Activated CD4-positive, alpha-beta T cell treated with anti-CD3 and anti-CD28 coated beads for 36 hours (primary cell): ENCODE measurements at regions of chr7 and their contacts with region 1.

Region 1: GRCh38 chr7:139340037-139340807 is 915 bp upstream of the FMC1 start:
- DNase-seq: peak; percentile 99
- ATAC-seq: peak; percentile 79
- H3K4me3 Mint-ChIP-seq: peak overlapping the region; percentile 97
- H3K27ac Mint-ChIP-seq: peak overlapping the region; percentile 99
- H3K4me1 Mint-ChIP-seq: peaks cover 23% of the 10 kb centered on the region
- H3K27me3 Mint-ChIP-seq: peaks cover 2% of the 10 kb centered on the region

Region 2: DNA sequence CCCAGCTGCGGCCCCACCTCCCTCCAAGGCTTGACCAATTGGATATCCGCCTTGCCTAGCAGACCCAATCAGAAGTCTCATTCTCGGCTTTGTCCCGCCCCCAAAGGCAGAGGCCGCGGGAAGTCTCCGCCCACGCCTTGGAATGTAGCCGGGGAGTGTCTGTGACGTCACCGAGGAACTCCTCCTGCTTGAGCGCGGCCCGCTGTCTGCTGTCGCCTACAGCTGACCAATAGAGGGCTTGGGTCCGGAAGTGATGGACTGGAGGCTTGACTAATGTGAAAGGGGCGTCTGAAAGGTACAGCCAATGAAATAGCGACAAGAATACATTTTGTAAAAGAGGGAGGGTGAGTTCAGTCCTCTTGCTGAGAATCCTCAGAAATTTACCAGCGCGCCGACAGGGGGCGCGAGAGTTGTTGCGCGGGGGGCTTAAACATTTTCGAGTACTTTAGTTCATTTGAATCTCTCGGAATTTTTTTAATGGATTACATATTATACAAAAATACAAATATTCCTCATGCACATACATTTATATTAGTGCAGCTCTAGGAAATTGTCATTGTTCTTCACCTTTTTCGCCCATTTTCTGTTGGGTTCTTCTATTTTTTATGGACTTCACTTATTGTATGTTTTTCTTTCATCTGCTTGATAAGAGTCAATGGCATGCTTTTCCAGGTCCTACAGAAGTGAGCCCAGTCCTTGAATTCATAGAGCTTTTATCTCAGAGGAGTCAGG is 1338.0 kb before region 1 on chr7:
- CTCF ChIA-PET with region 1: no interaction called
- POLR2A ChIA-PET with region 1: no interaction called
- intact Hi-C with region 1: loop called in 1 of 2 experiments (anchors 2 kb)
- DNase-seq: peak; percentile 98
- ATAC-seq: peak; percentile 96
- H3K4me3 Mint-ChIP-seq: peak overlapping the region; percentile 82
- H3K27ac Mint-ChIP-seq: peak overlapping the region; percentile 92
- H3K4me1 Mint-ChIP-seq: peaks cover 24% of the 10 kb centered on the region
- H3K27me3 Mint-ChIP-seq: no peaks in the 10 kb centered on the region

Region 3: DNA sequence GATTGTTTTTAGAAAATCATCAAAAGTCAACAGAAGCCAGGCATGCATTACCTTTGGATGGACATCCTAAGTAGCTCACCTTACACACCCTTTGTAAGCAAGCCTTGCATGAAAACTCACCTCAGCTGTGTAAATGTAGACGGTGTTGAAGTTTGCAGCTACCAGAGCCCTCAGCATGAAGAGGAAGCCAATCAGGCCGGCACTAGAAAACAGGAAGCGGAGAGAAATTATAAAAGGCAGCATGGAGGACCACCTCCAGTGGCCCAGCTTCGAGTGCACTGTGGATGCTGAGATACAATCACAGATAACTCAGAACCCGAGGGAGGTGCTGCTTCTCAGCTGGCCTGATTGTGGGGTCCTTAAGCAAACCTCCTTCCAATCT is 714.4 kb before region 1 on chr7:
- CTCF ChIA-PET with region 1: no interaction called
- POLR2A ChIA-PET with region 1: no interaction called
- intact Hi-C with region 1: no loop called
- DNase-seq: peak; percentile 10
- ATAC-seq: peak; percentile 44
- H3K4me3 Mint-ChIP-seq: no peak overlapping the region
- H3K27ac Mint-ChIP-seq: peak overlapping the region; percentile 40
- H3K4me1 Mint-ChIP-seq: peaks cover 42% of the 10 kb centered on the region
- H3K27me3 Mint-ChIP-seq: no peaks in the 10 kb centered on the region

Region 4: DNA sequence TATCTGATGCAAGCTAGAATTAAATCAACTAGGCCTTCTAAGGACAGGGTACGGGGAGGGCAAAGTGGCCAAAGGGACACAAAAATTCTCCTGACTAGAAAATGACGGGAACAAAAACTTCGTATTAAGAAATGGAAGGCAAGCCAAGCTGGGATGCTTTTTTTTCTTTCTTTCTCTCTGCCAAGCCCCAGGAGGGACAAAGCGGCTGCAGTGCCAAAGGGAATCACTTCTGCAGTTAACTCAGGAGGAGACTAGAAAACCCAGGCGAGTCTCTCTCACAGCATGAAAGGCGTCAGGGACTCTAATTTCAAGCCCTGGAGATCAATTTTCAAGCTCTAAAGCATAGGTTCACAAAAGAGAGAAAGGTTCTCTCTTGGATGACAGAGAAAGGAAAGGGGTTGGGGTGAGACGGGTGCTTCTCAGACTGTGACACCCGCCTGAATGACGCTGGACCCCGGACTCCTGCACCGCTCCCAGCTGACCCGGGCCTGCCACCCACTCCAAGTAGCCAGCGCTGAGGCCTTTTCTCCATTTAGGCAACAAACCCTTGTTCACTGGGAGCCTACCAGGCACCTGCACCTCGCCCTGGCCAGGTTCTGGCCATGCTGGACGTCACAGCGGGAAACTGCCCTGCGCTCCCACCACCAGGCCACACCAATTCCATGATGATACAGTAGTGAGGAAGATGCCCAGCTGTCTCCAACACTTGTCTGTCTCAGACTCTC is 415.6 kb before region 1 on chr7:
- CTCF ChIA-PET with region 1: no interaction called
- POLR2A ChIA-PET with region 1: no interaction called
- intact Hi-C with region 1: no loop called
- DNase-seq: no peak
- ATAC-seq: no peak
- H3K4me3 Mint-ChIP-seq: no peak overlapping the region
- H3K27ac Mint-ChIP-seq: no peak overlapping the region
- H3K4me1 Mint-ChIP-seq: peaks cover 9% of the 10 kb centered on the region
- H3K27me3 Mint-ChIP-seq: no peaks in the 10 kb centered on the region

Region 5: DNA sequence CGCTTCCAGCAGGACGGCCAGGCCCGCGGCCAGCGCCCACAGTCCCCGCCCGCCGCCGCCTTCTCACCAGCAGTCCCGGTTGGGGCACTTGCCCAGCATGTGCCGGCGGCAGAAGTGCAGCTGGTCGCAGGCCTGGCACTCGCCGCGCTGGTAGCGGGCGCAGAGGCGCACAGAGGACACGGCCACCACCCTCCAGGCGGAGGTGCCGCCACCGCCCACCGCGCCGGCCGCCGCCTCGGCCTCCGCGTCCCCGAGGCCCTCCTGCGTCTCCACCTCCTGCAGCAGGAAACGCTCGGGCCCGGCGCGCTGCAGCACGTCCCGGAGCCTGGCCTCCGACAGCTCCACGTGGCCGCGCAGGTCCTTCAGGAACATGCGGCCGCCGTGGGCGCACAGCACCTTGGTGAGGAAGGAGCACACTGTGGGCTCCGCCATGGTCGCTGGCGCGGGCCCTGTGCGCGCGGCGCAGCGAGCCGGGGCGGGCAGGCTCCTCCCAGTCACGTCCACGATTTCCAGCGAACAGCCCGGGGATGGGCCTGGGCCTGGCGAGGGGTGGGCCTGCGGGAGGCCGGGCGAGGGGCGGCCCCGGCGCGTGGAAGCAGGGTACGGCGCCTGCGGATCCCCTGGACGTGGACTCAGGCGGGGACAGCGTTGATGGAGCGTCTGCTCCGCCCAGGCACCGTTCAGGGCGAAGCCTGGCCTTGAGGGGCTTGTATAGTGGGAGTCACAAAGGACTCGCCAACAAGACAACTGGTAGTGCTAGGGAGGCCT is 304.5 kb before region 1 on chr7 and contains the start of gene ZC3HAV1L:
- CTCF ChIA-PET with region 1: no interaction called
- POLR2A ChIA-PET with region 1: no interaction called
- intact Hi-C with region 1: loop called in 1 of 2 experiments (anchors 5 kb)
- DNase-seq: peak; percentile 83
- ATAC-seq: peak; percentile 96
- H3K4me3 Mint-ChIP-seq: peak within 1 kb of the TSS; percentile 82
- H3K27ac Mint-ChIP-seq: peak within 1 kb of the TSS; percentile 88
- H3K4me1 Mint-ChIP-seq: peaks cover 22% of the 10 kb centered on the region
- H3K27me3 Mint-ChIP-seq: no peaks in the 10 kb centered on the region
- total RNA-seq, gene ZC3HAV1L: 19.8 to 23.2 TPM

Region 6: GRCh38 chr7:139109188-139109982 is 230.8 kb before region 1 on chr7 and contains the start of gene ZC3HAV1:
- CTCF ChIA-PET with region 1: no interaction called
- POLR2A ChIA-PET with region 1: no interaction called
- intact Hi-C with region 1: loop called (anchors 1 to 2 kb)
- DNase-seq: peak; percentile 93
- ATAC-seq: peak; percentile 73
- H3K4me3 Mint-ChIP-seq: peak within 1 kb of the TSS; percentile 99
- H3K27ac Mint-ChIP-seq: peak within 1 kb of the TSS; percentile 96
- H3K4me1 Mint-ChIP-seq: peaks cover 27% of the 10 kb centered on the region
- H3K27me3 Mint-ChIP-seq: no peaks in the 10 kb centered on the region
- total RNA-seq, gene ZC3HAV1: 110 to 120 TPM

Region 7: GRCh38 chr7:139230774-139231512 is 109.3 kb before region 1 on chr7 and contains the start of gene UBN2:
- CTCF ChIA-PET with region 1: interaction called, 3 read pairs
- POLR2A ChIA-PET with region 1: no interaction called
- intact Hi-C with region 1: loop called (anchors 1 to 2 kb)
- DNase-seq: peak; percentile 96
- ATAC-seq: peak; percentile 88
- H3K4me3 Mint-ChIP-seq: peak within 1 kb of the TSS; percentile 98
- H3K27ac Mint-ChIP-seq: peak within 1 kb of the TSS; percentile 93
- H3K4me1 Mint-ChIP-seq: peaks cover 20% of the 10 kb centered on the region
- H3K27me3 Mint-ChIP-seq: peaks cover 3% of the 10 kb centered on the region
- total RNA-seq, gene UBN2: 8.3 to 11.8 TPM

Region 8: GRCh38 chr7:140230861-140231770 is 890.9 kb after region 1 on chr7:
- CTCF ChIA-PET with region 1: no interaction called
- POLR2A ChIA-PET with region 1: no interaction called
- intact Hi-C with region 1: loop called (anchors 1 to 2 kb)
- DNase-seq: peak; percentile 86
- ATAC-seq: peak; percentile 65
- H3K4me3 Mint-ChIP-seq: peak overlapping the region; percentile 99
- H3K27ac Mint-ChIP-seq: peak overlapping the region; percentile 99
- H3K4me1 Mint-ChIP-seq: peaks cover 45% of the 10 kb centered on the region
- H3K27me3 Mint-ChIP-seq: no peaks in the 10 kb centered on the region